ENCODE measurements at regions of chr9 and their contacts with region 1.

Region 1: DNA sequence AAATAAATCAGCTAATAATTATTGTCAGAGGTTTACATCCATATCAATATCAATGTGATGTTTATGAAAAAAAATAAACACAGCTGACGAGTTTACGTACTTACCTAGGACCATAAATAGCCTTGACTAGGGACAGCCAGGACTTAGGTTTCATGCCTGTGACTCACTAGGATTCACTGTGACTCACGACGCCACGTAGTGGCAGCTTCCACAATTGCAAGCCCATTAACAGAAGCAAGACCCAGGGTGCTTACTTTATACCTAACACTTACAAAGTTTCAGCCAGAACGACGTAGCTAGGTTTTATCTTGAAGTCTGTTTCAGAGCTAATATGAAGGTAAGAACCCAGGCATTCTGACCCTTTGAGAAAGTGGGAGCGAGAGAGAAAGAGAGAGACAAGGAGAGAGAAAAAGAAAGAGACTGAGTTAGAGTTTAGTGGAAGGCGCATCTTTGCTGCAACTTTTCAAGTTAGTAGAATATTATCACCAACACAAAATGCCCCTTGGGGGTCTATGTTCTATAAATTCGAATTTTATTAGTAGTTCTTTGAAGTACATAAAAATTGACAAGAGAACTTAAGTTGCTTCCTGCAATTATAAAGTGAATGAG is 191.2 kb downstream of the GNA14 start:
- DNase-seq: peak; percentile 52 to 77 (median 60)
- H3K4me3 ChIP-seq: no peak overlapping the region
- H3K4me3 Mint-ChIP-seq: no peak overlapping the region
- H3K27ac ChIP-seq: no peak overlapping the region
- H3K27ac Mint-ChIP-seq: no peak overlapping the region
- H3K4me1 ChIP-seq: no peaks in the 10 kb centered on the region
- H3K4me1 Mint-ChIP-seq: peaks cover 10 to 18% (median 13%) of the 10 kb centered on the region in 3 donors
- H3K27me3 ChIP-seq: no peaks in the 10 kb centered on the region
- H3K27me3 Mint-ChIP-seq: peaks cover 1 to 4% of the 10 kb centered on the region in 2 donors

Region 2: DNA sequence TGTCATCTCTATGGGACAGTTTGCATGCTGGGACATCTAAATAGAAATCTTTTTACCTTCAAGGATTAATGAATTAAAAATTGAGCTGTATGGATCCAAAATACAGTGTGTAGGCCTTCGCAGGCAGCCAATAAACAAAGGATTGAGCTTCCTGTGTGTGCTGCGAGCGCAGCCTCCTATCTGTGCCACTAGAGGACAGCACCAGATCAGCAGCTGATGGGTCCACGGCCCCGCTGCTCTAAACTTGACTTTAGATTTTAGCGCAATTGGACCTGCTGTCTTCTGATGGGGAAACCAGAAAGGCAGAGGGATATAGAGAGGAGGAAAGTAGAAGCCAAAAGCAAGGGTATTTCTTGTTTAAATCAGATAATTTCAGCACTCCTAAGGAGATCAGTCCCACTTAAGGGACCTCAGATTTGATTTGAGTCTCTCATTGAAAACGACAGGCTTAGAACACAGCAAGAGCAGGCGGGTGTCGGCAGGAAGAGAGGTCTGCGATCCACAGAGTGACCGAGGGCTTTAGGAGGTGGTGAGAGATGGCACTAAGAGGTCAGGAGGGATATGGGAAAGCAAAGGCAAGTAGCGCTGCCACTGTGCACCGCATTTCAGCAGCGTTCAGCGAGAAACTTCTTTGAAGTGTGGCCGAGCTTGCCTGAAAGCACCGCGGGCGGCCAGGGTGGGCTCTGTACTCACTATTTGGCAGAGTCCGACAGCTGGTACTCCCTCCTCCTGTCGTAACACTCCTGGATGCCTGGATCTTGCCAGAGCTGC is 23.1 kb before region 1 on chr9:
- CTCF ChIA-PET with region 1: interaction called, 11 read pairs
- POLR2A ChIA-PET with region 1: no interaction called
- DNase-seq: peak in 3 of 5 donors; percentile 9 to 35 (median 11)
- H3K4me3 ChIP-seq: no peak overlapping the region
- H3K4me3 Mint-ChIP-seq: peak overlapping the region in 1 of 7 donors; percentile 80
- H3K27ac ChIP-seq: no peak overlapping the region
- H3K27ac Mint-ChIP-seq: peak overlapping the region in 1 of 8 donors; percentile 88
- H3K4me1 ChIP-seq: no peaks in the 10 kb centered on the region
- H3K4me1 Mint-ChIP-seq: peaks cover 3 to 5% (median 4%) of the 10 kb centered on the region in 3 donors
- H3K27me3 ChIP-seq: no peaks in the 10 kb centered on the region
- H3K27me3 Mint-ChIP-seq: peaks cover 5 to 8% of the 10 kb centered on the region in 2 donors

Region 3: GRCh38 chr9:77440057-77440456 is 16.9 kb before region 1 on chr9:
- CTCF ChIA-PET with region 1: interaction called, 33 read pairs
- POLR2A ChIA-PET with region 1: no interaction called
- DNase-seq: no peak
- H3K4me3 ChIP-seq: no peak overlapping the region
- H3K4me3 Mint-ChIP-seq: no peak overlapping the region
- H3K27ac ChIP-seq: no peak overlapping the region
- H3K27ac Mint-ChIP-seq: no peak overlapping the region
- H3K4me1 ChIP-seq: no peaks in the 10 kb centered on the region
- H3K4me1 Mint-ChIP-seq: no peaks in the 10 kb centered on the region
- H3K27me3 ChIP-seq: no peaks in the 10 kb centered on the region
- H3K27me3 Mint-ChIP-seq: peaks cover 5 to 9% of the 10 kb centered on the region in 2 donors

Region 4: DNA sequence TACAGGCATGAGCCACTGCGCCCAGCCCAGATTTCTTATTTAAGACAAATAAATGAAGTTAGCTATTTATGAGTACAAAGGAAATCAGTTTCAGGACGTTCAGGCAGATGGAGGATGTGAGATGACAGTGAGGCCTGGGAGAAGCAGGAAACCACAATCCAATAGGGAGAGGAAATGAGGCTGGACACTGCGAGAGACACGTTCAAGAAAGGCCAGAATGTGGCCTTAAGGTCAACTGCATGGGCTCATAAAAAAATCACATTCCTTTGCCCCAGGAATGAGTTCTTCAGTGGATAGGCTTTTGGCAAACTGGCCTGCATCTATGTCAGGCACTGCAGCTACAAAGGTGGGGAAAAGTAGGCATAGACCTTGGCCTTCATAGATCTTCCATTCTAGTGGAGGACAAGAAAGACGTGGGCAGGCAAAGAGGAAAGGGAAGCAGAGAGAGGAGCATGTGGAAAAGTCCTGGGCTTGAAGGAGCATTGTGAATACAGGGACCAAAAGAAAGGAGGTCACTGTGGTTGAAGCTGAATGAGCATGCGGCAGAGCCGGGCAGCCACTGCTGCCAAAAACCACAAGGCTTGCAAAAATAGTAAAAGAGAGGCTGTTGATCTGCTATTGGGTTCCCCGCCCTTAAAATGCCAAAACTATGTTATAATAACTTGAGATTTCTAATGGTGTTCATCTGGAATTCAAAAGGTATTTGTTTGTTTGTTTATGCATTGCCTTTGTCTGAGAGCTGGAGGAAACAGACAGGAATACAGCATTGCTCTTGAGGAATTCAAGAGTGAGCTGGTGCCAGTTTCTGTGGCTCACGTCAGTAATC is 58.2 kb after region 1 on chr9:
- CTCF ChIA-PET with region 1: no interaction called
- POLR2A ChIA-PET with region 1: no interaction called
- DNase-seq: no peak
- H3K4me3 ChIP-seq: no peak overlapping the region
- H3K4me3 Mint-ChIP-seq: peak overlapping the region in 1 of 7 donors; percentile 19
- H3K27ac ChIP-seq: no peak overlapping the region
- H3K27ac Mint-ChIP-seq: no peak overlapping the region
- H3K4me1 ChIP-seq: no peaks in the 10 kb centered on the region
- H3K4me1 Mint-ChIP-seq: peaks cover 0 to 8% (median 6%) of the 10 kb centered on the region in 3 donors
- H3K27me3 ChIP-seq: no peaks in the 10 kb centered on the region
- H3K27me3 Mint-ChIP-seq: peaks cover 1 to 4% of the 10 kb centered on the region in 2 donors

Measured in CD8-positive, alpha-beta memory T cell (primary cell).